Esophagus muscularis mucosa (tissue), 4 donors: ENCODE measurements at regions of chr12 and their contacts with region 1.

Region 1: GRCh38 chr12:113899561-113900471 is 66.3 kb downstream of the RBM19 start:
- DNase-seq: no peak
- H3K4me3 ChIP-seq: no peak overlapping the region
- H3K27ac ChIP-seq: no peak overlapping the region
- H3K4me1 ChIP-seq: no peaks in the 10 kb centered on the region
- H3K27me3 ChIP-seq: no peaks in the 10 kb centered on the region
- CTCF ChIP-seq: no peak
- EP300 ChIP-seq: no peak
- POLR2A ChIP-seq: no peak

Region 2: GRCh38 chr12:113537751-113538087 is 362.1 kb before region 1 on chr12:
- intact Hi-C with region 1: loop called (anchors 10 kb)
- DNase-seq: no peak
- H3K4me3 ChIP-seq: no peak overlapping the region
- H3K27ac ChIP-seq: no peak overlapping the region
- H3K4me1 ChIP-seq: no peaks in the 10 kb centered on the region
- H3K27me3 ChIP-seq: peaks cover 0 to 87% (median 12%) of the 10 kb centered on the region in 4 donors
- CTCF ChIP-seq: no peak
- EP300 ChIP-seq: no peak
- POLR2A ChIP-seq: no peak

Region 3: GRCh38 chr12:114194956-114195355 is 295.1 kb after region 1 on chr12:
- intact Hi-C with region 1: no loop called
- DNase-seq: no peak
- H3K4me3 ChIP-seq: no peak overlapping the region
- H3K27ac ChIP-seq: no peak overlapping the region
- H3K4me1 ChIP-seq: no peaks in the 10 kb centered on the region
- H3K27me3 ChIP-seq: peaks cover 0 to 27% (median 0%) of the 10 kb centered on the region in 4 donors
- CTCF ChIP-seq: no peak
- EP300 ChIP-seq: no peak
- POLR2A ChIP-seq: no peak

Region 4: GRCh38 chr12:114408886-114409851 is 509.4 kb after region 1 on chr12:
- intact Hi-C with region 1: no loop called
- DNase-seq: no peak
- H3K4me3 ChIP-seq: peak overlapping the region; percentile 58 to 70 (median 62)
- H3K27ac ChIP-seq: peak overlapping the region; percentile 90 to 95 (median 92)
- H3K4me1 ChIP-seq: peaks cover 6 to 61% (median 45%) of the 10 kb centered on the region in 4 donors
- H3K27me3 ChIP-seq: peaks cover 0 to 35% (median 0%) of the 10 kb centered on the region in 4 donors
- CTCF ChIP-seq: peak in 1 of 3 experiments; percentile 16
- EP300 ChIP-seq: no peak
- POLR2A ChIP-seq: no peak